HCT116 (cell line): ENCODE measurements at regions of chr14 and their contacts with region 1.

Region 1: GRCh38 chr14:88189417-88190191 is 133.5 kb downstream of the KCNK10 start:
- DNase-seq: peak; percentile 67
- ATAC-seq: peak; percentile 98
- H3K4me3 ChIP-seq: no peak overlapping the region
- H3K27ac ChIP-seq: no peak overlapping the region
- H3K4me1 ChIP-seq: no peaks in the 10 kb centered on the region
- H3K27me3 ChIP-seq: 0 out of 2 replicates have a peak, but pooled peaks cover 11% of the 10 kb centered on the region
- CTCF ChIP-seq: peak; percentile 55 to 74 (median 72); a peak in 5 of 6 replicates
- POLR2A ChIP-seq: no peak
- RAD21 ChIP-seq: peak; percentile 75

Region 2: GRCh38 chr14:88129306-88130056 is 60.1 kb before region 1 on chr14:
- CTCF ChIA-PET with region 1: no interaction called
- POLR2A ChIA-PET with region 1: no interaction called
- RAD21 ChIA-PET with region 1: no interaction called
- intact Hi-C with region 1: no loop called
- DNase-seq: no peak
- ATAC-seq: no peak
- H3K4me3 ChIP-seq: no peak overlapping the region
- H3K27ac ChIP-seq: no peak overlapping the region
- H3K4me1 ChIP-seq: no peaks in the 10 kb centered on the region
- H3K27me3 ChIP-seq: no peaks in the 10 kb centered on the region
- CTCF ChIP-seq: no peak
- POLR2A ChIP-seq: no peak
- RAD21 ChIP-seq: no peak

Region 3: GRCh38 chr14:88233915-88234314 is 44.3 kb after region 1 on chr14:
- CTCF ChIA-PET with region 1: interaction called, 26 read pairs
- POLR2A ChIA-PET with region 1: no interaction called
- RAD21 ChIA-PET with region 1: interaction called in 1 of 2 experiments, 3 read pairs
- intact Hi-C with region 1: loop called (anchors 2 kb)
- DNase-seq: peak; percentile 24
- ATAC-seq: peak; percentile 88
- H3K4me3 ChIP-seq: no peak overlapping the region
- H3K27ac ChIP-seq: no peak overlapping the region
- H3K4me1 ChIP-seq: no peaks in the 10 kb centered on the region
- H3K27me3 ChIP-seq: peaks cover 16% of the 10 kb centered on the region
- CTCF ChIP-seq: peak in 2 of 3 experiments; percentile 62 to 64; a peak in 4 of 6 replicates
- POLR2A ChIP-seq: no peak
- RAD21 ChIP-seq: peak; percentile 44; the same call in 1 of the 2 replicates

Region 4: GRCh38 chr14:88380405-88380804 is 190.8 kb after region 1 on chr14:
- CTCF ChIA-PET with region 1: interaction called, 21 read pairs
- POLR2A ChIA-PET with region 1: no interaction called
- RAD21 ChIA-PET with region 1: interaction called, 7 read pairs
- intact Hi-C with region 1: loop called (anchors 1 kb)
- DNase-seq: no peak
- ATAC-seq: 0 out of 2 replicates have a peak, but pooled peaks have one; percentile 46
- H3K4me3 ChIP-seq: no peak overlapping the region
- H3K27ac ChIP-seq: no peak overlapping the region
- H3K4me1 ChIP-seq: peaks cover 0 to 5% of the 10 kb centered on the region in 2 experiments; a peak in 2 of 4 replicates
- H3K27me3 ChIP-seq: no peaks in the 10 kb centered on the region; the same call in 1 of the 2 replicates
- CTCF ChIP-seq: peak; percentile 6 to 35 (median 24); a peak in 2 of 6 replicates
- POLR2A ChIP-seq: no peak
- RAD21 ChIP-seq: peak; percentile 48; the same call in 1 of the 2 replicates

Region 5: DNA sequence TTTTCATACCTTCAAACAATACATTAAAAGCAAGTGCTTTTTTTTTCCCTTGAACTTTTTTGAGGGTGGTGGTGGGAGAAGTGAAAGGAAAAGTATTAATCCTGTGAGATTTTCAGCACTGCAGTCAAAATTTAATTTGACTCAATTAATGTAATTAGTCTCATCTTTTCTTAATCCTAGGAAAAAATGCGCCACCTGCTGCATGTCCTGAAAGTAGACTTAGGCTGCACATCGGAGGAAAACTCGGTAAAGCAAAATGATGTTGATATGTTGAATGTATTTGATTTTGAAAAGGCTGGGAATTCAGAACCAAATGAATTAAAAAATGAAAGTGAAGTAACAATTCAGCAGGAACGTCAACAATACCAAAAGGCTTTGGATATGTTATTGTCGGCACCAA is 248.1 kb after region 1 on chr14:
- CTCF ChIA-PET with region 1: interaction called, 4 read pairs
- POLR2A ChIA-PET with region 1: no interaction called
- RAD21 ChIA-PET with region 1: no interaction called
- intact Hi-C with region 1: loop called (anchors 1 kb)
- DNase-seq: no peak
- ATAC-seq: no peak
- H3K4me3 ChIP-seq: no peak overlapping the region
- H3K27ac ChIP-seq: no peak overlapping the region
- H3K4me1 ChIP-seq: no peaks in the 10 kb centered on the region
- H3K27me3 ChIP-seq: no peaks in the 10 kb centered on the region
- CTCF ChIP-seq: peak; percentile 17 to 56 (median 38); a peak in 3 of 6 replicates
- POLR2A ChIP-seq: no peak
- RAD21 ChIP-seq: peak; percentile 28; the same call in 1 of the 2 replicates

Region 6: GRCh38 chr14:89013084-89013504 is 823.5 kb after region 1 on chr14:
- CTCF ChIA-PET with region 1: no interaction called
- POLR2A ChIA-PET with region 1: no interaction called
- RAD21 ChIA-PET with region 1: no interaction called
- intact Hi-C with region 1: loop called (anchors 10 kb)
- DNase-seq: peak; percentile 50
- ATAC-seq: peak; percentile 90
- H3K4me3 ChIP-seq: no peak overlapping the region
- H3K27ac ChIP-seq: no peak overlapping the region
- H3K4me1 ChIP-seq: no peaks in the 10 kb centered on the region
- H3K27me3 ChIP-seq: no peaks in the 10 kb centered on the region
- CTCF ChIP-seq: peak in 2 of 3 experiments; percentile 42 to 63; a peak in 5 of 6 replicates
- POLR2A ChIP-seq: no peak
- RAD21 ChIP-seq: peak; percentile 71